PC-9 (cell line): ENCODE measurements at regions of chr1 and their contacts with region 1.

Region 1: DNA sequence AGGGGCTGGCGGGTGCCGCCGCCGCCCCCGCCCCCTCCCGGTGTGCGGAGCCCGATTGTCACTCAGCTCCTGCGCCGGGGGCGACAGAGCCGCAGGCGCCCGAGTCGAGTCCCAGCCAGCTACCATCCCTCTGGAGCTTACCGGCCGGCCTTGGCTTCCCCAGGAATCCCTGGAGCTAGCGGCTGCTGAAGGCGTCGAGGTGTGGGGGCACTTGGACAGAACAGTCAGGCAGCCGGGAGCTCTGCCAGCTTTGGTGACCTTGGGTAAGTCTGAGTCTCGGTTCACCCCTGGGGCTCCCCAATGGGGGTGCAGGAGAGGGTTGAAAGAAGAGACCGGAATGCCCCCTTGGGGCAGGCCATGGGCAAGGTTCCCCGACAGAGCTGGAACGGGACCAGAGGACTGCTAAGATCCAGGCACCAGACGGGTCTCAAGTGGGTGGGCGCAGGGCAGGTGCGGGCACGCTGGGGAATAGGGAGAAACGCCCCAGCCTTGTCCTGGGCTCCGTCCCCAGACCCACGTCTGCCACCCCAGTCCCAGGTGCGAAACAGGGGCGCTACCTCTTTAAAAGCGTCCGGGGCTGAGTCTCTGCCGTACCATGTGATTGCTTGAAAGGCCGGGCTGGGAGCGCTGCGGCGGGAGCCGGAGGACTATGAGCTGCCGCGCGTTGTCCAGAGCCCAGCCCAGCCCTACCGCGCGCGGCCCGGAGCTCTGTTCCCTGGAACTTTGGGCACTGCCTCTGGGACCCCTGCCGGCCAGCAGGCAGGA is at the start of gene ADORA1:
- DNase-seq: peak; percentile 52 to 66
- H3K4me3 ChIP-seq: peak within 1 kb of the TSS; percentile 80
- H3K27ac ChIP-seq: no peak within 1 kb of the TSS
- H3K4me1 ChIP-seq: peaks cover 54% of the 10 kb centered on the region
- H3K27me3 ChIP-seq: no peaks in the 10 kb centered on the region
- CTCF ChIP-seq: no peak
- total RNA-seq, gene ADORA1: 5.9 and 8.3 TPM in 2 replicates

Region 2: DNA sequence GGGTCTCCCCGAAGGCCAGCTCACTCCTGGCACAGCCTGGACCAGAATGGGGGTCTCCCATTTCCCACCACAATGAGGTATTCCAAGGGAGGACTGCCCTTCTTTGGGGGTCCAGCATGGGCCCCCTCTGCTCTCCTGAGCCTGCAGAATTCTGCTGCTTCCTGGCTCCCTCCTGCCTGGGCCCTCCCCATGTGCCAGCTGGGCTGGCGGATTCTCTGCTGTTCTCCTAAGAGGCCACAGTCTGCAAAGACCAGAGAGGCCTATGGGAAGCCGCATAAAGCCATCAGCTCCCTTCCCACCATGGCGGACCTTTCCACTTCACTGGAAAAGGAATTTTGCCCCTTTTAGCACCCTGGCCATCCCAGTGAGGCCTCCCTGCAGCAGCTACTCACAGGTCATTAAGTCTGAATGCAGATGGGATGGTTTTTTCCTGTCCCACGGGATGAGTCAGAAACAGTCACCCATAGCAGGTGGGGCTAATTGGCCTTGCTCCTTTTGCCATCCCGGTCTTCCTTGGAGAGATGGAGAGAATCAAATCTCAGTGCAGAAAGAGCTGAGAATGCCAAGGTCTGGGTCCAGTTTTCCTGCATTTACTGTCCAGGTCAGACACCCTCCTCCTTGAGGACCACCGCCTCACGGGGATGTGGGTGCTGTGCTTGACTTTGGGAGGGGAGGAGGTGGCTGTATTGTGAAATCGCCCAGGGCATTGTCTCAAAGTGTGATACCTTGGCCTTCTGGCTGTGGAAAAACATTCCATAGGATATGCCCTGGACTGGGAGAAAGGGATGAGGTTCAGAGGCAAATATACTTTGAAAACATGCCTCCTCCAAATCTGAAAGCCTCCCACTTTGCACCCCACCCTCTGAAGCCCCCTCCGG is 24.5 kb after region 1 on chr1:
- CTCF ChIA-PET with region 1: interaction called, 3 read pairs
- POLR2A ChIA-PET with region 1: interaction called, 5 read pairs
- intact Hi-C with region 1: loop called (anchors 1 kb)
- DNase-seq: peak; percentile 60 to 91
- H3K4me3 ChIP-seq: peak overlapping the region; percentile 36; the same call in 1 of the 2 replicates
- H3K27ac ChIP-seq: peak overlapping the region; percentile 83
- H3K4me1 ChIP-seq: peaks cover 65% of the 10 kb centered on the region
- H3K27me3 ChIP-seq: no peaks in the 10 kb centered on the region
- CTCF ChIP-seq: no peak

Region 3: DNA sequence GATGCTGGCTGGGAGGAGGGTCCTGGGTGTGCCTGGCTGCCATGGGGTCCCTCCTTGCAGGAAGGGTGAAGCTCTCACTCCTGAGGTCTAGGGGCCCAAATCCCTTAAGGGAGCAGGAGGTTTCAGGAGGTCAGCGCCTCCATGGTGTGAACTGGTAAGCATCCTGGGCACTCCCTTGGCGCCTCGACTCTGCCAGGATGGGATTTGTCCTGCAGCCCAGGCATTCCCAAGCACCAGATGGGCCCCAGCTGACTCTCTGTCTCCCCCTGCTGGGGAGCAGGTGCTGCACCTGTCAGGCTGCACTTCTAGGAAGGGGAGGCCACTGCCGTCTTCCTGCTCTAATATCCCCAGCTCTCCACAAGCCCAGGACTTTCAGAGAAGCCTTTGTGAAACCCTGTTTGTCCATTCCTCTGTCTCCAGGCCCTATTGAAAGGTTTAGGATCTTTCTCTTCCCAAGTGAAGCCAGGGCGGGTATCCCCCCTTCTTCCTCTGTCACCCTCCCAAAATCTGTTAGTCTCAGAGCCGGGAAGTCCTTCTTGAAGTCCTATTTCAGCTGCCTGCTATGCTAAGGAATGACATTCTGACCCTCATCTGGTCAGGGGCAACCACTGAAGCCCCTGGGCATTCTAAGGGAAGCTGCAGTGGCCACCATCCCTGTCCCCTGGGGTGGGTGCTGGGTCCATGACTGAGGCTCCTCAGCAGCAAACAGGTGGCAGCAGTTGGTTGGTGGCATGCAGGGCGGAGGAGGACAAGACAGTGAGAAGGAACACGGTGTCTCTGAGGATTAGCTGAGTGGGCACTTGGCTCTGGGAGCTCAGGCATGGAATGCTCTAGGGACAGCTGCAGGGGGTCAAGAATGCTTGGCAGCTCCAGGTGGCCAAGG is 44.5 kb after region 1 on chr1:
- CTCF ChIA-PET with region 1: interaction called, 5 read pairs
- POLR2A ChIA-PET with region 1: no interaction called
- intact Hi-C with region 1: loop called (anchors 2 kb)
- DNase-seq: peak; percentile 46 to 74
- H3K4me3 ChIP-seq: no peak overlapping the region
- H3K27ac ChIP-seq: no peak overlapping the region
- H3K4me1 ChIP-seq: peaks cover 31% of the 10 kb centered on the region
- H3K27me3 ChIP-seq: no peaks in the 10 kb centered on the region
- CTCF ChIP-seq: peak; percentile 91